ENCODE measurements at regions of chr5 and their contacts with region 1.

Region 1: GRCh38 chr5:151239237-151239861 is 13.6 kb upstream of the GM2A start:
- DNase-seq: peak; percentile 78
- ATAC-seq: peak; percentile 85
- H3K4me3 Mint-ChIP-seq: peak overlapping the region; percentile 21
- H3K27ac Mint-ChIP-seq: peak overlapping the region; percentile 13
- H3K4me1 Mint-ChIP-seq: peaks cover 37% of the 10 kb centered on the region
- H3K27me3 Mint-ChIP-seq: no peaks in the 10 kb centered on the region
- CTCF ChIP-seq: peak; percentile 98

Region 2: DNA sequence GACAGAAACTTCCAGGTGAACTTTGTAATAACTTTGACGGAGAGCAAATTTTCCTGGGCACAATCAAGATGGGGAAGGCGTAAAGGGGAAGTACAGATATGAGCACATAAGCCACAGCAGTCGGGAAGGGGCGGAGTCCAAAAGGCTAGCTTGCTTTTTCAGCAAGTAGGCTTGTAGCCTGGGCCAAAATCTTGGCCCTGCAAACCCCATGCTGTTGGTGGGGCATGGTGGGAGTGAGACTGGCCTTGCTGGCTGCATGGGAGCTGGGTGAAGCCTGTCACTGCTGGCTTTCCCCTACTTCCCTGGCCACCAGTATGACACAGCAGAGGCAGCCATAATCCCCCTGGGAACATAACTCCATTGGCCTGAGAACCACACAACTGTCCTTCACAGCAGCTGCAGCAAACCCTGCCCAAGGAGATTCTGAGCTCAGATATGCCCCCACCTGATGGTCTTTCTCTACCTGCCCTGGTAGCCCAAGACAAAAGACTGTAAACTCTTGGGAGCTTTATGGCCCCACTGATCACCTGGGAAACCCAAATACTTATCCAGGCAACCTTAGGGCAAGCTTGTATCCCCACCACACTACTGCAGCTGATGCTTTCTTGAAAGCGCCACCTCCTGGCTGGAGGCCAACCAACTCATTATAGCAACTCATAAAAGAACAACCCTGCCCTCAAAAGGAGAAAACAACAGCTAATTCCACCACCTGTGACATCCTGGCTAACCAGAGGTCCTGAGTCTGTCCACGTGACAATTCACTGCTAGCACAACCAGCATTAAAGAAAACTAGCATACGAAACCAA is 504.6 kb before region 1 on chr5:
- CTCF ChIA-PET with region 1: no interaction called
- POLR2A ChIA-PET with region 1: no interaction called
- intact Hi-C with region 1: no loop called
- DNase-seq: peak; percentile 57
- ATAC-seq: peak; percentile 7
- H3K4me3 Mint-ChIP-seq: no peak overlapping the region
- H3K27ac Mint-ChIP-seq: peak overlapping the region; percentile 56
- H3K4me1 Mint-ChIP-seq: peaks cover 51% of the 10 kb centered on the region
- H3K27me3 Mint-ChIP-seq: no peaks in the 10 kb centered on the region
- CTCF ChIP-seq: peak; percentile 20

Region 3: GRCh38 chr5:151002250-151002649 is 237.1 kb before region 1 on chr5:
- CTCF ChIA-PET with region 1: no interaction called
- POLR2A ChIA-PET with region 1: no interaction called
- intact Hi-C with region 1: no loop called
- DNase-seq: no peak
- ATAC-seq: no peak
- H3K4me3 Mint-ChIP-seq: no peak overlapping the region
- H3K27ac Mint-ChIP-seq: no peak overlapping the region
- H3K4me1 Mint-ChIP-seq: no peaks in the 10 kb centered on the region
- H3K27me3 Mint-ChIP-seq: no peaks in the 10 kb centered on the region
- CTCF ChIP-seq: no peak

Region 4: DNA sequence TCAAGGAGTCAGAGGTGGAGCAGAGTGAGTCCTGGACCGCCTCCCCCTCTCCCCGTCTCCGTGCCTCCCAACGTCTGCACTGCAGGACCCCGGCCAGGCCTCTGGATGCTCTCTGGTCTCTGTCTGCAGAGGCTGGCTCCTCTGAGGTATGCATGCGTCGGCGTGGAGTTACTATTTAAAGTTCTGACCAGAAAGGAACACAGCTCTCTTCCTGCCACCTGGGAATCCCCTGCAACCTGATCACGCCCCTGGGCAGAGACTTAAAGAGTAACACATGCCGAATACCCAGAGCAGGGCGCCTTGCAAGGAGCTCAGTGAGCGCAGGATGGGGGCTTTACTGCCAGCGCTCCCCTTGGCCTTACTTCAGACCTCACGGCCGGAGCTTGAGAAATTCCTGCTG is 97.8 kb before region 1 on chr5:
- CTCF ChIA-PET with region 1: interaction called, 11 read pairs
- POLR2A ChIA-PET with region 1: no interaction called
- intact Hi-C with region 1: no loop called
- DNase-seq: peak; percentile 90
- ATAC-seq: peak; percentile 91
- H3K4me3 Mint-ChIP-seq: peak overlapping the region; percentile 73
- H3K27ac Mint-ChIP-seq: peak overlapping the region; percentile 86
- H3K4me1 Mint-ChIP-seq: peaks cover 88% of the 10 kb centered on the region
- H3K27me3 Mint-ChIP-seq: no peaks in the 10 kb centered on the region
- CTCF ChIP-seq: no peak

Region 5: DNA sequence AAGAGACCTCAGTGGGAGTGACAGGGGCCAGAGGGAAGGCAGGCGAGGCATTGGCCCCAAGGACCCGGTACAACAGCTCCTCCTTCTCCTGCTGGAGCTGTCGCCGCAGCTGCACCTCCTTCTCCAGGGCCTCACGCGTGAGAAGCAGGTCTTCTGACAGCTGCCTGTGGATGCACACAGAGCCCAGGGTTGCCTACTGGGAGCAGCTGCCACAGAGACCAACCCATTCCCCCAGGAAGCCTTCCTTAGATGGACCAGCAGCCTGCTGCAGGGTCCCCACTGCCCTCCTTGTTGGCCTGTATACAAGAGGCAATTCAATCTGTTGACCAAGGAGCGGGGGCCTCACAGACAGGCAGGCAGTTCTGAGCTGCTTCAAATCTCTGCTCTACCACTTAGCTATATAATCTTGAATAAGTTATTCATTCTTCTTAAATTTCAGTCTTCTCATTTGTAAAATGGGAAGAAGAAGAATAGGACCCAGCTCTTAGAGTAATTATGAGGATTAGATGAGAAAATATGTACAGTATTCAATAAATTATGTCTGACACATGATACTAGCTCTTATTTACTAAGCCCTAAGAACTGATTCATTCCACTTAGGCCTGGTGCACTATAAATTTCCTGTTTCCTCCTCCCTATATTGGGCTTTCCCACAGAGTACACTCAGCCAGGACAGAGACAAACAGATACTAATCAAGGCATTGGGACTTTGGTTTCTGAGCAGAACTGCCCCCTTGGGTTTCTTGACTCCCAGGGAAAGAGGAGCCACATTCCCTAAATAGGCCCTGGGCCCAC is 55.7 kb before region 1 on chr5:
- CTCF ChIA-PET with region 1: interaction called, 12 read pairs
- POLR2A ChIA-PET with region 1: no interaction called
- intact Hi-C with region 1: no loop called
- DNase-seq: no peak
- ATAC-seq: no peak
- H3K4me3 Mint-ChIP-seq: no peak overlapping the region
- H3K27ac Mint-ChIP-seq: peak overlapping the region; percentile 27
- H3K4me1 Mint-ChIP-seq: peaks cover 2% of the 10 kb centered on the region
- H3K27me3 Mint-ChIP-seq: no peaks in the 10 kb centered on the region
- CTCF ChIP-seq: no peak

Region 6: DNA sequence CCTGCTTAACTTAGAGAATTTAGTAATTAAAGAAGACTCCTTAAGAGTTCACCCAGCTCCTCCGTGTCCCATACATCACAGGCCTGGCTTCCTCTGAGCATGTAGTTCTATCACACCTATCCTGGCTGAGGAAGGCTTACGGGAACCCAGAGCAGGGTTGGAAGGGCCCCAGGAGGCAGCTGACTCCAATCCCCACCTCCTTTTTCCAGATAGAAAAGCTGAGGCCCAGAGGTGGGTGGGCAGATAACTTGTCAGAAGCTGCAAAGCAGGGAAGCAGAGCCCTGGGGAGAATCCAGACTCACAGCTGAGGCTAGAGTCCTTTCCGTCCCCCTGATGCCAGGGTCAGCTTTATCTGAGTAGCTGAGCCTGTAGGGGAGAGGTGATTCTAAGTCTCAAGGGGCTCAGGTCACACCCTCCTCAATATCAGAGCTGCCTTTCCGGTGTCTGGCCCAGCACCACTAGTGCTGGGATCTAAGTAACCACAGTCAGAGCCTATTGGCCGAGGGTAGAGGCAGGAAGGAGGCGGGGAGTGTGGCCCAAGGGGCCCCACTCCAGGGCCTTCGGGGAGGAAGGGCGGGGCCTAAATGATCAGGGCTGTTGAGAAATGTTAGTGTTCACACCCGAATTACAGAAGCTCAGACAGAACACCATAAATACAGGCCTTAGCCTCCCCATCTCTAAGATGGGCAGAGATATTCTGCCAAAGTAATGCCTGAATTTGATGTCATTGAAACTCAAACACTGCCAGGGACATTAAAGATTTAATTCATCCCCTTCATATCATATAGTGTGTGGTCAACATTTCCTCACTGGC is 25.3 kb before region 1 on chr5:
- CTCF ChIA-PET with region 1: interaction called, 83 read pairs
- POLR2A ChIA-PET with region 1: interaction called, 6 read pairs
- intact Hi-C with region 1: no loop called
- DNase-seq: peak; percentile 94
- ATAC-seq: peak; percentile 86
- H3K4me3 Mint-ChIP-seq: peak overlapping the region; percentile 88
- H3K27ac Mint-ChIP-seq: peak overlapping the region; percentile 99
- H3K4me1 Mint-ChIP-seq: peaks cover 75% of the 10 kb centered on the region
- H3K27me3 Mint-ChIP-seq: no peaks in the 10 kb centered on the region
- CTCF ChIP-seq: no peak

Region 7: GRCh38 chr5:151223469-151224264 is 15.7 kb before region 1 on chr5 and contains the start of gene CCDC69:
- CTCF ChIA-PET with region 1: interaction called, 83 read pairs
- POLR2A ChIA-PET with region 1: interaction called, 13 read pairs
- intact Hi-C with region 1: no loop called
- DNase-seq: peak; percentile 75
- ATAC-seq: peak; percentile 52
- H3K4me3 Mint-ChIP-seq: peak within 1 kb of the TSS; percentile 92
- H3K27ac Mint-ChIP-seq: peak within 1 kb of the TSS; percentile 94
- H3K4me1 Mint-ChIP-seq: peaks cover 55% of the 10 kb centered on the region
- H3K27me3 Mint-ChIP-seq: no peaks in the 10 kb centered on the region
- CTCF ChIP-seq: no peak
- total RNA-seq, gene CCDC69: 33.0 to 34.5 TPM

Region 8: DNA sequence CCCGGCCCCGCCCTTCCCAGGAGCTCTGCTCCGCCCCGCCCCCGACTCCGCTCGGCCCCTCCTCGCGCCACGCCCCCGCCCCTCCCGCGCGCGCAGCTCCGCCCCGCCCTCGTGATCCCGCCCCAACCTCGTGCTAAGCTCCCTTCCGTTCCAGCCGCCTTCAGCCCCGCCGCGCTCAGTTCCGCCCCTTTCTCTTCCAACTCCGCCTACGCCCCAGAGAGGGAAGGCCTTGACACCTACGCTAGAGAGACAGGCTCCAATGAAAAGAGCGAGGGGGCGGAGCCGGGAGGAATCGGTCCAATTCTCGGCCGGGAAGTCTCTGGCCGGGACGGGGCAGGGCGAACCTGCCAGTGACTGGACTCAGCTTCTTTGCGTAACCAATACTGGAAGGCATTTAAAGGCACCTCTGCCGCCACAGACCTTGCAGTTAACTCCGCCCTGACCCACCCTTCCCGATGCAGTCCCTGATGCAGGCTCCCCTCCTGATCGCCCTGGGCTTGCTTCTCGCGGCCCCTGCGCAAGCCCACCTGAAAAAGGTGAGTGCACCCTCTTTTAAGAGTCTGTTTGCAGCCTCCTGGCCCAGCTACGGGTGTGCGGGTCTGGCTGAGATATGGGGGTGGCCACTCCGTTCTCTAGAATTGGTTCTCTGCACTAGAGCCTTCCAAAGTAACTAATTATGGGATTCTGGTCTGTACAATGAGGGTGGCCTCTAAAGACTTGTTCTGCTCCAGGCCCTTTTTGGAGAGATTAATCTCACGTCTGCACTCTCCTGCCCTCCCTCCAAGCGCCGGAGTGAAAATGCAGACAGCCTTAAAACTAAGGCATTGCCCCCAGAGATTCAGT is 13.6 kb after region 1 on chr5 and contains the start of gene GM2A:
- CTCF ChIA-PET with region 1: interaction called, 23 read pairs
- POLR2A ChIA-PET with region 1: interaction called, 11 read pairs
- intact Hi-C with region 1: no loop called
- DNase-seq: peak; percentile 100
- ATAC-seq: peak; percentile 92
- H3K4me3 Mint-ChIP-seq: peak within 1 kb of the TSS; percentile 90
- H3K27ac Mint-ChIP-seq: peak within 1 kb of the TSS; percentile 95
- H3K4me1 Mint-ChIP-seq: peaks cover 39% of the 10 kb centered on the region
- H3K27me3 Mint-ChIP-seq: no peaks in the 10 kb centered on the region
- CTCF ChIP-seq: no peak
- total RNA-seq, gene GM2A: 13.3 to 13.7 TPM

Region 9: GRCh38 chr5:151274670-151275069 is 35.3 kb after region 1 on chr5:
- CTCF ChIA-PET with region 1: no interaction called
- POLR2A ChIA-PET with region 1: no interaction called
- intact Hi-C with region 1: no loop called
- DNase-seq: no peak
- ATAC-seq: no peak
- H3K4me3 Mint-ChIP-seq: no peak overlapping the region
- H3K27ac Mint-ChIP-seq: no peak overlapping the region
- H3K4me1 Mint-ChIP-seq: no peaks in the 10 kb centered on the region
- H3K27me3 Mint-ChIP-seq: no peaks in the 10 kb centered on the region
- CTCF ChIP-seq: no peak